CD4-positive, alpha-beta memory T cell (primary cell): ENCODE measurements at regions of chr5 and their contacts with region 1.

Region 1: DNA sequence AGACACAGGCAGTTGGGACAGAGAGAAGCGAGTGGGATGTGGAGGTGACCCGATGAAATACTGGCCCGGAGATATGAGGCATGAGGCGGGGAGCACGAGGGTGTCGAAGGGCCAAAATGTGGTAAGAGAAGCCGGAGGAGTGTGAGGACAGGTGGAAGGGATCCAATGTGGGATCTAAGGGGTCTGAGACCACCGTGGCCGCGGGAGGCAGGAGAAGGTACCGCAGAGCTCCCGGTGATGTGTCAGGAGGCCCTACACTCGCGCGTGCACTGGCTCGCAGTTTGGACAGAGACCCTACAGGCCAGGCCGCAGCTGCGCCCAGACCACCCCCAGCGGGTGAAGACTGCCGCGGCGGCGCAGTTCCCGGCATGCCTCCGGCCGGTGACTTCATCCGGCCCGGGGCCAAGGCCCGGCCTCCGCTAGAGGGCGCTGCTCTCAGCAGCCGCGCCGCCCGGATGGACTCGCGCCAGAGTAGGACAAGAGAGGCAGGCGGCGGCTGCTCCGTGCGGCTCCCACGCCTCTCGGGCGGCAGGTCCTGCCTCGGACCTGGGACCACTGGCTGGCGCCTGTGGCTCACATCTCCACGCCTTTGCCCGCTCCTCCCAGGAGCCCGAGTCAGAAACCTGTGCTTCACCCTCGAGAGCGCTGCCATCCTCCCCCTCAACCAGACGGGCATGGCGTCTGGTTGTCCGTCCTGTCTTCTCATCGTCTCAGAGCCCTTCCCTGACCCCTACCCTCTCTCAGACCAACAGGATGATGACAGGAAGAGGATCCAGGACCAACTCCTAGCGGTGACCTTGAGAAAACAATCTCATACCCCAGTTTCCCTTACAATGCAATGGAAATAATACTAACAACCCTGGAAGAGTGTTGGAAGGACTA is 35.4 kb upstream of the STING1 start:
- DNase-seq: peak; percentile 79 to 93 (median 86)
- H3K4me3 ChIP-seq: peak overlapping the region; percentile 65 to 84
- H3K4me3 Mint-ChIP-seq: peak overlapping the region; percentile 76 to 96 (median 90)
- H3K27ac ChIP-seq: peak overlapping the region; percentile 78
- H3K27ac Mint-ChIP-seq: peak overlapping the region; percentile 80 to 99 (median 98)
- H3K4me1 ChIP-seq: peaks cover 13% of the 10 kb centered on the region
- H3K4me1 Mint-ChIP-seq: peaks cover 16 to 32% (median 23%) of the 10 kb centered on the region in 4 donors
- H3K27me3 ChIP-seq: no peaks in the 10 kb centered on the region
- H3K27me3 Mint-ChIP-seq: peaks cover 1 to 4% of the 10 kb centered on the region in 2 donors

Region 2: GRCh38 chr5:139104577-139105276 is 413.2 kb before region 1 on chr5:
- CTCF ChIA-PET with region 1: no interaction called
- POLR2A ChIA-PET with region 1: no interaction called
- intact Hi-C with region 1: no loop called
- DNase-seq: no peak
- H3K4me3 ChIP-seq: no peak overlapping the region
- H3K4me3 Mint-ChIP-seq: no peak overlapping the region
- H3K27ac ChIP-seq: no peak overlapping the region
- H3K27ac Mint-ChIP-seq: no peak overlapping the region
- H3K4me1 ChIP-seq: no peaks in the 10 kb centered on the region
- H3K4me1 Mint-ChIP-seq: no peaks in the 10 kb centered on the region
- H3K27me3 ChIP-seq: no peaks in the 10 kb centered on the region
- H3K27me3 Mint-ChIP-seq: no peaks in the 10 kb centered on the region

Region 3: DNA sequence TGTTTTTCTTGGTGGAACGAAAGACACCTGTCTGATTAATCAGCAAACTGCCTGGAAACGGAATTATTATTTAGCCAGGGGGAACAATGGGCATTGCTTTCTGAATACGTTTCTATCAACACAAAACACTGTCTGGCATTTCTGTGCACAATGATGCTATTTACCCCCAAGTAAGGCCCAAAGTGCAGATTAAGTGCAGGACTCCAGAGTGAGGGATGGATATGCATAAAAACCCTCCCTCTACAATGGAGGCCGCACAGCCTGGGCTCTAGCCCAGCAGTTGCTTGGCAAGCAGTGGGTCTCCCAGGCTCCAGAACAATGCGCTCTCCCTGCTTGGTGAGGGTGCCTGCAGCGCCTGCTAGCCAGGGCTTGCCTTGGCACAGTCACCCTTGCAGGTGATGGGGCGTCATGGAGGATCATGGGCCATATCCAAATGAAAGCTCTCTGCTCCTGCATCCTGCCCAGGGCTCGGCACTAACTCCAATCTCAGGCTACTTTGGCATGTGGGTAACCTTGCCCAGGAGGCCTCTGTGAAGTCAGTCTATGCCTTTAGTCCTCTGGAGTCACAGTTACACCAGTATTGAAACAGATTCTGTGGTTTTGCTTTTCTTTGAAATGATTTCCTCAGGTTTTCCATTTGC is 102.6 kb before region 1 on chr5:
- CTCF ChIA-PET with region 1: interaction called, 632 read pairs
- POLR2A ChIA-PET with region 1: interaction called, 103 read pairs
- intact Hi-C with region 1: no loop called
- DNase-seq: no peak
- H3K4me3 ChIP-seq: no peak overlapping the region
- H3K4me3 Mint-ChIP-seq: peak overlapping the region in 6 of 8 donors; percentile 21 to 66 (median 48)
- H3K27ac ChIP-seq: no peak overlapping the region
- H3K27ac Mint-ChIP-seq: peak overlapping the region in 4 of 7 donors; percentile 47 to 85 (median 73)
- H3K4me1 ChIP-seq: peaks cover 31% of the 10 kb centered on the region
- H3K4me1 Mint-ChIP-seq: peaks cover 13 to 33% (median 23%) of the 10 kb centered on the region in 4 donors
- H3K27me3 ChIP-seq: no peaks in the 10 kb centered on the region
- H3K27me3 Mint-ChIP-seq: no peaks in the 10 kb centered on the region

Region 4: GRCh38 chr5:139439013-139439903 is 78.7 kb before region 1 on chr5 and contains the start of gene DNAJC18:
- CTCF ChIA-PET with region 1: interaction called, 35 read pairs
- POLR2A ChIA-PET with region 1: interaction called, 30 read pairs
- intact Hi-C with region 1: loop called (anchors 1 kb)
- DNase-seq: peak; percentile 84 to 90 (median 86)
- H3K4me3 ChIP-seq: peak within 1 kb of the TSS; percentile 83 to 91
- H3K4me3 Mint-ChIP-seq: peak within 1 kb of the TSS; percentile 96 to 99 (median 98)
- H3K27ac ChIP-seq: peak within 1 kb of the TSS; percentile 99
- H3K27ac Mint-ChIP-seq: peak within 1 kb of the TSS; percentile 93 to 100 (median 100)
- H3K4me1 ChIP-seq: peaks cover 31% of the 10 kb centered on the region
- H3K4me1 Mint-ChIP-seq: peaks cover 32 to 63% (median 41%) of the 10 kb centered on the region in 4 donors
- H3K27me3 ChIP-seq: no peaks in the 10 kb centered on the region
- H3K27me3 Mint-ChIP-seq: no peaks in the 10 kb centered on the region
- total RNA-seq, gene DNAJC18: 6.2 to 7.3 TPM

Region 5: DNA sequence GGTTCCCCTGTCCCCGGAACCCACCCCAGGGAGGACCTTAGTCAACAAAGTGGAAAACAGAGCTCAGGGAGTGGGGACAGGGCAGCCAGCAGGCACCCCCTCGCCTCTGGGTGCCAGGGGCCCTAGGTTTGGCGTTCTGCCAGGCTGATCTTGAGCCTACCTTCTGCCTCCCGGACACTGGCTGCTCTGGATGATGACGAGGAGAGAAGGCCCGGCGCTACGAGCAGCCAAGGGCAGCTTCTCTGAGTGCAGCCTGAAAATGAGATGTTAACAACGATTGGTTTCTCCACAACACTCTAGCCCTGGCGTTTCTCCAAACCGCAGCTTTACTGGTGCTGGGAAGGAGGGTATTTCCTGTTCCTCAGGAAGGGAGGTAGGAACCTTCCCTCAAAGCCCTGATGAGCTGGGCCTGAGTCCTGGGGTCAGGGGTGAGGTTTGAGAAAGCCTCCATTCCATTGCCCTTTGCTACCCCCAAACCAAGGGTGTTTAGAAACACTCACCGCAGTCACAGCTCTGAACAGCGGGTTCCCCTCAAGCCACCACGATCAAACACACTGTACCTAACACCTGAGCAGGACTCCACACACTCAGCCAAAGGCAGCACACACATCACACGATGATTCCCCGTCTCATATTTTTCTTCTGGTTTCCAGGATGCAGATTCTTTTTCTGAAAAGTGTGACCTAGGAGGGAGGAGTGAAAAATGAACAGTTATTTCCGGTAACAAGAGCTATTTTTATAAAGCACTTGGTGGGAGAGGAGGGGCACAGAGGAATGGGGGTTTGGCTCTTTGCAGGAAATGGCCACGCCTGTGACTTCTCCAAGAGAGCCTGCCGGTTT is 35.7 kb before region 1 on chr5 and contains the start of gene STING1:
- CTCF ChIA-PET with region 1: interaction called, 64 read pairs
- POLR2A ChIA-PET with region 1: interaction called, 41 read pairs
- intact Hi-C with region 1: loop called (anchors 1 kb)
- DNase-seq: peak; percentile 78 to 83 (median 80)
- H3K4me3 ChIP-seq: peak within 1 kb of the TSS; percentile 82 to 95
- H3K4me3 Mint-ChIP-seq: peak within 1 kb of the TSS; percentile 92 to 98 (median 94)
- H3K27ac ChIP-seq: peak within 1 kb of the TSS; percentile 86
- H3K27ac Mint-ChIP-seq: peak within 1 kb of the TSS; percentile 90 to 98 (median 97)
- H3K4me1 ChIP-seq: peaks cover 46% of the 10 kb centered on the region
- H3K4me1 Mint-ChIP-seq: peaks cover 21 to 57% (median 39%) of the 10 kb centered on the region in 4 donors
- H3K27me3 ChIP-seq: no peaks in the 10 kb centered on the region
- H3K27me3 Mint-ChIP-seq: no peaks in the 10 kb centered on the region
- total RNA-seq, gene STING1: 141 to 144 TPM

Region 6: GRCh38 chr5:139560752-139561654 is 43.1 kb after region 1 on chr5 and contains the start of gene UBE2D2:
- CTCF ChIA-PET with region 1: interaction called, 10 read pairs
- POLR2A ChIA-PET with region 1: interaction called, 18 read pairs
- intact Hi-C with region 1: loop called (anchors 1 kb)
- DNase-seq: peak; percentile 96 to 99 (median 97)
- H3K4me3 ChIP-seq: peak within 1 kb of the TSS; percentile 60 to 90
- H3K4me3 Mint-ChIP-seq: peak within 1 kb of the TSS; percentile 94 to 99 (median 98)
- H3K27ac ChIP-seq: peak within 1 kb of the TSS; percentile 93
- H3K27ac Mint-ChIP-seq: peak within 1 kb of the TSS; percentile 93 to 99 (median 96)
- H3K4me1 ChIP-seq: peaks cover 42% of the 10 kb centered on the region
- H3K4me1 Mint-ChIP-seq: peaks cover 25 to 48% (median 37%) of the 10 kb centered on the region in 4 donors
- H3K27me3 ChIP-seq: no peaks in the 10 kb centered on the region
- H3K27me3 Mint-ChIP-seq: no peaks in the 10 kb centered on the region
- total RNA-seq, gene UBE2D2: 160 to 169 TPM

Region 7: DNA sequence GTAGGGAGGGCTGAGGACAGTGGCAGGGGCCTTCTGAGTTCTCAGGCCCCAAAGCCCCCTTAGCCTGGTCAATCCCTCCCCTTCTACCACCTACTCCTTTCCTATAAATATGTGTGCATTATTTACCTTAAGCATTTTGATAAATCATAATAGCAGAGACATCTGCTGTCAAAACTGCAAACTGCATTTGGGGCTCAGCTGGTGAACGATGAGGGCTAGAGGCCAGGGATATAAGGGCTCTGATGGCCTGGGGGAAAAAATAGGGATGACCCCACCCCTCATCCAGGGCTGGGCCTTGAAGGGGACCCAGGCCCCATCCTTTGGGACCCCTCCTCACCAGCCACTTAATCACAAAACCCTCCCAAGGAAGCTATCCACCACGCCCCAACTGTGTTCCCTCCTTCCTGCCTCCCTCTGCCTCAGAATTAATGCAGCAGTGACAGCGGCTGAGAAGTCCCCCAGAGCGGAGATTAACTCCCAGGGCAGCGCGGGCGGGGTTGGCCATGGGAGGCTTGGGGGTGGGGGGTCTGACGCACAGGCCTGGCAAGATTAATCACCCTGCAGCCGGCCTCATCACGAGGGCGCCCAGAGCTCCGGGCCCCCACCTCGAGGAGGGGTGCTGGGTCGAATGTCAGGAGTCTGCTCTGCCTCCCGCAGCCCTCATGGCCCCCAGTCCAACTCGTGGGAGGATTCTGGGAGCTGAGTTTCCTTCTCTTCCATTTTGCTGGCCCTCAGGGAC is 172.3 kb after region 1 on chr5:
- CTCF ChIA-PET with region 1: interaction called, 11 read pairs
- POLR2A ChIA-PET with region 1: no interaction called
- intact Hi-C with region 1: loop called (anchors 1 kb)
- DNase-seq: peak in 2 of 5 donors; percentile 12 to 28
- H3K4me3 ChIP-seq: no peak overlapping the region
- H3K4me3 Mint-ChIP-seq: no peak overlapping the region
- H3K27ac ChIP-seq: no peak overlapping the region
- H3K27ac Mint-ChIP-seq: peak overlapping the region in 1 of 7 donors; percentile 23
- H3K4me1 ChIP-seq: no peaks in the 10 kb centered on the region
- H3K4me1 Mint-ChIP-seq: no peaks in the 10 kb centered on the region
- H3K27me3 ChIP-seq: no peaks in the 10 kb centered on the region
- H3K27me3 Mint-ChIP-seq: peaks cover 0 to 2% of the 10 kb centered on the region in 2 donors